HepG2 (cell line): ENCODE measurements at regions of chr5 and their contacts with region 1.

Region 1: DNA sequence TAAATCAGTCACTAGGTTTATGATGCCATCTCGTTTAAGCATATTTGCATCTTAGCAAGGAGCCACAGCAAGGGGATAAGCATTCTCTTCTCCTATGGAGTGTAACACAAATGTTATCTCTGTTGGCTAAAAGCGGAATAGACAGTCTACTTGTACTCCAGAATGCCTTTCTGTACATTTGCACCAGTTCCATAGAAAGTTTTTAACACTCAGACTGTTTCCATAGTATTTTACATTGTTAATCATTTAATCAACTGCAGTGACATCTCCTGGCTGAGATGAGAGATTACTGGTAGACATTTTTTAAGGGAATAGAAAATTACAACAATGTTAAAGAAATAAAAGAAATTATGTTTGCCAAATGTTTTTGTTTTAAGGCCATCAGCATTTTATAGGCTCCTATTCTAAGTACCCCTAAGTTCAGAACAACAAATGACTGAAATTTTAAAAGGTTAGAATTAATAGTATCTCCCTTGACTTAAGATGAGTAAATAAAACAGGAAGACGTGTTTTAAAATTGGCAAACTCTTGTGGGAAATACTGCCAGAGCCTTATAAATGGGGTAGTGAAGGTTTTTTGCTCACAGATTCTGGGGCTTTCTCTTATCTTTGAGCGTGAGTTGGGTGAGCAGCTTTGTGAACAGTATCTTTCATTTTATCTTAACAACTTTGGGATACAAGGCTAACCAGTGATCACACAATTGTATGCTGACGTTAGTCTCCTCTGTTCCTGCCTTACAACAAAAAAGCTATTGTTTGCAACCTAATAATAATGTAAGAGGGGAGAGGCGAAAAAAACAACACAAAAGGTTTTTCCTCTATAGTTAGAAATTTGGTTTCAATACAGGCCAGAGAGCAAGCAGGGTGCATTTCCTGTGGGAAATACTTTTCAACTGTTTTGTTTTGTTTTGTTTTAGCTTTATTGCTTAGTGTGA is 294.3 kb downstream of the FBXL7 start:
- DNase-seq: no peak
- ATAC-seq: no peak
- H3K4me3 ChIP-seq: no peak overlapping the region
- H3K27ac ChIP-seq: no peak overlapping the region
- H3K4me1 ChIP-seq: no peaks in the 10 kb centered on the region
- H3K27me3 ChIP-seq: no peaks in the 10 kb centered on the region
- CTCF ChIP-seq: no peak
- EP300 ChIP-seq: no peak
- POLR2A ChIP-seq: no peak
- RAD21 ChIP-seq: no peak

Region 2: DNA sequence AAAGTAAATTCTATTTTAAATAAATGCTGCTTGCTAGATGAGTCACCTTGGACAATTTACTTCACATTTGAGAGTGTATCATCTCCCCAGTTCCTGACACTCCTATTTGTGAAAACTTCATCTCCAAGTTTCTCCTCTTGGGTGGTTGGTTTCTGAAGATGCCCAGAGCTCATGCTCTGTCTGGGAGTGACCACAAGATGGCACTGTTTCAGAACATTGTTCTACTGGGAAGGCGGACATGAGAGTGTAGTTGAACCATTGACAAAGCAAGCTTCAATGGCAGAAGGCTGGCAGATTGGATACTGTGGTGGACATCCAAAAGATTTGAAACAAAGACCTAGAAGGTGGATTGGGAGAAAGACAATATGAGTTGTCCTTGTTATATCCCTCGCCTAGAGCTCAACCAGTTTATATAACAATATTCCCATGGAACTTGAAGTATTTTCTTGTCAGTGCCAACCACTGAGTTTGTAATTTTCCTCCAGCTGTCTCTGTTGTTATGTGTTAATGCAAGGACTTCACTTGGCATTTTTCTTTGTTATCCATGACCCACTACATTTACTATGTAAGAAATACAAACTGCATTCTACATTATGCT is 688.4 kb before region 1 on chr5:
- CTCF ChIA-PET with region 1: no interaction called
- POLR2A ChIA-PET with region 1: no interaction called
- in situ Hi-C with region 1: loop called (anchors 25 kb)
- intact Hi-C with region 1: loop called (anchors 2 kb)
- DNase-seq: peak; percentile 36
- ATAC-seq: peak; percentile 87
- H3K4me3 ChIP-seq: no peak overlapping the region
- H3K27ac ChIP-seq: no peak overlapping the region
- H3K4me1 ChIP-seq: no peaks in the 10 kb centered on the region
- H3K27me3 ChIP-seq: 0 out of 5 replicates have a peak, but pooled peaks cover 0 to 3% of the 10 kb centered on the region in 2 experiments
- CTCF ChIP-seq: peak; percentile 71
- EP300 ChIP-seq: no peak
- POLR2A ChIP-seq: no peak
- RAD21 ChIP-seq: 0 out of 2 replicates have a peak, but pooled peaks have one; percentile 35